Astrocyte of the cerebellum (primary cell): ENCODE measurements at regions of chrX and their contacts with region 1.

Region 1: GRCh38 chrX:123728016-123728415 is 4.8 kb downstream of the THOC2 start:
- DNase-seq: no peak
- H3K4me3 ChIP-seq: no peak overlapping the region
- CTCF ChIP-seq: no peak

Region 2: GRCh38 chrX:123648028-123648810 is 79.8 kb before region 1 on chrX:
- in situ Hi-C with region 1: loop called (anchors 5 kb)
- DNase-seq: peak; percentile 49
- H3K4me3 ChIP-seq: no peak overlapping the region
- CTCF ChIP-seq: no peak